Ascending aorta (tissue), 2 donors: ENCODE measurements at regions of chr19 and their contacts with region 1.

Region 1: GRCh38 chr19:1113033-1113985 is 9.5 kb downstream of the GPX4 start:
- DNase-seq: peak; percentile 81 to 97
- H3K4me3 ChIP-seq: peak overlapping the region in 1 of 2 donors; percentile 38
- H3K27ac ChIP-seq: peak overlapping the region; percentile 79 to 95
- H3K4me1 ChIP-seq: peaks cover 6 to 16% of the 10 kb centered on the region in 2 donors
- H3K27me3 ChIP-seq: no peaks in the 10 kb centered on the region
- CTCF ChIP-seq: peak; percentile 95 to 98 (median 95)

Region 2: DNA sequence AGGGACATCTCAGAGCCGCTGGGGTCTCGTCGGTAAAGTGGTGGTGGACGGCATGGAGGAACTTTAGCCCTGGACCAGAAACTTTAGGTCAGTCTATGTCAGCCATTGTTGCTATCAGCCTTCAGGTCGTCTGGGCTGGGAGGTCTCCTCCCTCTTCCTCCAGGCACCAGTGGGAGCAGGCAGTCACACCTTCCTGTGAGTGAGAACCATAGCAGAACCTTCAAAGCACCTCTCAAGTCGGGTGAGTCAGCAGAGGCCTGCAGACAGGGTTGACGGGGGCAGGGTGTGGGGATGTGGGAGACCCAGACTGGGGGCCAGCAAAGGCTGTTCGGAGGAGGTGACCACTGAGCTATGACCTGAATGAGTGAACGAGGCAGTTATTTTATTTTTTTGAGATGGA is 76.1 kb after region 1 on chr19:
- intact Hi-C with region 1: loop called (anchors 5 kb)
- DNase-seq: no peak
- H3K4me3 ChIP-seq: no peak overlapping the region
- H3K27ac ChIP-seq: no peak overlapping the region
- H3K4me1 ChIP-seq: peaks cover 0 to 3% of the 10 kb centered on the region in 2 donors
- H3K27me3 ChIP-seq: no peaks in the 10 kb centered on the region
- CTCF ChIP-seq: no peak